Tibial artery (tissue), 4 donors: ENCODE measurements at regions of chr15 and their contacts with region 1.

Region 1: GRCh38 chr15:52568601-52569256 is at the start of gene ARPP19:
- DNase-seq: peak; percentile 88 to 92
- H3K4me3 ChIP-seq: peak within 1 kb of the TSS; percentile 75 to 87
- H3K27ac ChIP-seq: peak within 1 kb of the TSS; percentile 83 to 96
- H3K4me1 ChIP-seq: peaks cover 0 to 42% (median 25%) of the 10 kb centered on the region in 4 donors
- H3K27me3 ChIP-seq: no peaks in the 10 kb centered on the region
- CTCF ChIP-seq: no peak

Region 2: GRCh38 chr15:52318729-52319500 is 249.8 kb before region 1 on chr15:
- intact Hi-C with region 1: no loop called
- DNase-seq: no peak
- H3K4me3 ChIP-seq: no peak overlapping the region
- H3K27ac ChIP-seq: no peak overlapping the region
- H3K4me1 ChIP-seq: no peaks in the 10 kb centered on the region
- H3K27me3 ChIP-seq: no peaks in the 10 kb centered on the region
- CTCF ChIP-seq: no peak

Region 3: DNA sequence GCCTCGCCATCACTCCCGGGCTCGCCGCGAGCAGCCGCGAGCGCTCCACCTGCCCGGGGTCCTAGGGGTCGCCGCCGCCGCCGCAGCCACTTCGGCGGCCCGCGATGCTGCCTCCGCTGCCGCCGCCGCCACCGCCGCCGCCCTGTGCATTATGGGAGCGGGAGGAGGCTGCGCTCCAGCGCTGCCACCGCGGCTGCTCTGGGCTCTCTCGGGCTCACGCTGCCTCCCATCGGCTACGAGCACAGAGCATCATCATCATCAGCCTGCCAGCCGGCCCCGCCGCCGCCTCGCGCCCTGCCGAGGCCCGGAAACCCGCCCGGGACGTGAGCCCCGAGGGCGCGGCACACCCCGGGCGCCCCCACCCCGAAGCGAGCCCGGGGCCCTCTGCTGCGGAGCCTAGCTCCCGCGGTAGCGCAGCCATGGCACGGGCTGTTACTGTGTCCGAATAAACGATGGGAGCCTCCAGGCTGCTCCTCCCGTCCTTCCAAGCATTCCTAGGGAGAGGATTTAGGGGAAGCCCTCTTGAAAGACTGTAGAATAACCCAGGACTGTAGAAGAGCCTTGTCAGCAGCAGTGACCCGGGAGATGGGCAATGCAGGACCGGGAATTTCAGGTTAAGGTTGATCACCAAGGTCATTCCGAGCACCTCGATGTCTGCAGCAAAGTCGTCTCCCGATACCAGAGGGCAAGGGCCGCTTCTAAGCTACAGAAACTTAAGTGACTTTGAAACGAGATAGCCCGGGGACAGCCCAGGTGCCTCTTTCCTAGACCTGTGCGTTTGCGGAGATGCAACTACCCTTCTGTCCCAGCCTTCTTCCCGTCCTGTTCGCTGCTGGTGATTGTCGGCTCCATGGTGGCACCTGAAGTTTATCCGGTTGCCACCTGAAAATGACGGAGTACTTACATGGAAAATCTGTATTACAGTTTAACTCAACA is 39.5 kb before region 1 on chr15:
- intact Hi-C with region 1: loop called (anchors 2 kb)
- DNase-seq: peak; percentile 66 to 81
- H3K4me3 ChIP-seq: peak overlapping the region; percentile 71 to 87
- H3K27ac ChIP-seq: peak overlapping the region; percentile 83 to 85
- H3K4me1 ChIP-seq: peaks cover 0 to 22% (median 13%) of the 10 kb centered on the region in 4 donors
- H3K27me3 ChIP-seq: no peaks in the 10 kb centered on the region
- CTCF ChIP-seq: no peak

Region 4: DNA sequence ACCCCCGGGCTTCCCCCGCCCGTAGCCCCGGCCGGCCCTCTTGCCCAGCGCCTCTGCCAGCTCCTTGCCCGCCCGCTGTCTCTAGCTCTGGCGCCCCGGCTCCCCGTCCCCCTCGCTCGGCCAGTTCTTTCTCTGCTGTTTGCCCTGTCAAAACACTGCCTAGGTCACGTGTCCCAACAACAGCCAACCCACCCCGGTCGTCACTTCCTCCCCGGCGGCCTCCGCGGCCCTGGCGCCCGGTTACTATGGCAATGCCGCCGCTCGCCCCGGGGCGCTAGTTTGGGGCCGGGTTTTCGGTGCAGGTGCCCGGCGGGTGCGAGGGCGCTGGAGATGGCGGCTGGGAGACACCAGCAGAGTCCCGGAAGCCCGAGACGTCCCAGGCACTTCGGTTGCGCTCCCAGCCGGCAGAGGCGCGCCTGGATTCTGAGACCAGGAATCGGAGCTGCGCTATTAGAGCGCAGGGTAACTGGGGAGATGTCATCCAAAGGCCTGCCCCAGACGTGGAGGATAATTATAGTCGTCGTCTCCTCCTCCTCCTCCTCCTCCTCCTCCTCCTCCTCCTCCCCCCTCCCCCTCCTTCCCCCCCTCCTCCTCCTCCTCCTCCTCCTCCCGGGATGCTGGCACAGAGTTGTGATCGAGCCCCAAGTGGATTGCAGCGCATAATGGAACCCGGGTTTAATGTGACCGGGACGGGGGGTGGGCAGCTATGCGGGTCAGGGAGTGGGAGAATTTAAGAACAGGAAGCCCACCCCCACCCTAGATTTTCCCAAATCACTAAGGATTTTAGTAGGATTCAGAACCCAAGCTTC is 110.7 kb after region 1 on chr15 and contains the start of gene ATOSA:
- intact Hi-C with region 1: loop called (anchors 5 kb)
- DNase-seq: peak; percentile 94 to 95
- H3K4me3 ChIP-seq: peak within 1 kb of the TSS; percentile 93 to 98
- H3K27ac ChIP-seq: peak within 1 kb of the TSS; percentile 96 to 99
- H3K4me1 ChIP-seq: peaks cover 0 to 41% (median 25%) of the 10 kb centered on the region in 4 donors
- H3K27me3 ChIP-seq: no peaks in the 10 kb centered on the region
- CTCF ChIP-seq: no peak